GM12878 (cell line): ENCODE measurements at regions of chr4 and their contacts with region 1.

Region 1: DNA sequence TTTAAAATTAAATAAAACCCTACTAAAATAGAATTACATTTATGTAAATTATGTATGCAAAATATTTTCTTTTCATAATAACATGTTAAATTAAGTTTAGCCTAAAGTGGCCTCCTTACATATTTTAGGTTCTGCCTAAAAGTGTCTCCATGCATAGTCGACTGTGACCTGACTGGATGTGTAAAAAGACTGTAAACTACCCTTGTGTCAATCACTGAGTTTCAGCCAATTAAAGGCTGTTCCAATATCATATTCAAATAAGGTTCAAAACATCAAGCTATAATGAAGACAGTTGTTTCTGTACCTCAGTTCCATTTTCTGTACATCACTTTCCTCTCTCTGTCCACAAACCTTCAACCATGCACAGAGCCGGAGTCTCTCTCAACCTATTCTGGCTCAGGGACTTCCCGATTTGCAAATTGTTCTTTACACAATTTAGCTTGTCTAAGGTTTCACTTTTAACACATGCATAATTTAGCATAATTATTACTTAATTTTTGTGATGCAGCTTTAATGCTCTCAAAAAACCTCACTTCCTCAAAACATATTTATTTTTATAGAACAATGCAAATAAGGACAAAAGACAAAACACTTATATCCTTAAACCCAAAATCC is 60.1 kb downstream of the SH3RF1 start:
- DNase-seq: peak; percentile 78
- ATAC-seq: peak; percentile 96
- H3K4me3 ChIP-seq: peak overlapping the region; percentile 29; the same call in 1 of the 2 replicates
- H3K27ac ChIP-seq: peak overlapping the region; percentile 72
- H3K4me1 ChIP-seq: peaks cover 16% of the 10 kb centered on the region
- H3K27me3 ChIP-seq: no peaks in the 10 kb centered on the region
- CTCF ChIP-seq: no peak
- EP300 ChIP-seq: peak in 1 of 2 experiments; percentile 37; a peak in 1 of 4 replicates
- POLR2A ChIP-seq: no peak
- RAD21 ChIP-seq: no peak

Region 2: GRCh38 chr4:168931182-168931650 is 279.4 kb before region 1 on chr4:
- CTCF ChIA-PET with region 1: no interaction called
- POLR2A ChIA-PET with region 1: no interaction called
- RAD21 ChIA-PET with region 1: no interaction called
- SMC1A ChIA-PET with region 1: no interaction called
- in situ Hi-C with region 1: no loop called
- intact Hi-C with region 1: no loop called
- DNase-seq: no peak
- ATAC-seq: no peak
- H3K4me3 ChIP-seq: no peak overlapping the region
- H3K27ac ChIP-seq: no peak overlapping the region
- H3K4me1 ChIP-seq: no peaks in the 10 kb centered on the region
- H3K27me3 ChIP-seq: no peaks in the 10 kb centered on the region
- CTCF ChIP-seq: no peak
- EP300 ChIP-seq: no peak
- POLR2A ChIP-seq: no peak
- RAD21 ChIP-seq: no peak

Region 3: DNA sequence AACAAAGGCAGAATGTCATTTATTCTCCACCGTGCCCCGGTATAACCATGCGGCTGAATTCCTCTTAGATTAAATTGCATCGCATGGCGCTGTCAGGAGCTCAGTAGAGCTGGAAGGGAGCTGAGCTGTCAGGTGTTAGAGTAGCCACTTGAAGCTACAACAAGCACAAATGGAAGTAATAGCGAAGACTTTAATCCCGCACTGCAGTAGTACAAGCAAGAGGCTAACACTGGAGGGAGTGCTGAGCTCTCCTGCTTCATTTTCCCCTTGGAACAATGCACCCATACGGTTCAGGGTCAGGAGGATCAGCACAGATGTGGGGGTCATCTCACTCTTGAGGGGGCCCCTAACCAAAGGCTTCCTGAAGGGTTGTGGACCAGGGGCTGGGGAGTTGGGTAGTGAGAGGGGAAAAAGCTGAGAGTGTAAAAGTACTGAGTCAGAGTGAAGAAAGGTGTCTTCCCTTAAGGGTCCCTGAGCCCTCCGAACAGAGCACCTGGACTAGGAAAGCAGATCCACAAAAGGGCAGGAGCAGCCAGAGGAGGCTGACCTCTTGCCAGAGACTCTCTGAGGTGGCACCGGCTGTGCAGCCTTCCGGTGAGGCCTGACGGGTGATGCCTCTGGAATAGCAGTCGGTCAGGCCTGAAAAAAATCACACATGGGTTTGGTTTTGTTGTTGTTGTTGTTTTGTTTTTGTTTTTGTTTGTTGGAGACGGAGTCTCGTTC is 164.6 kb before region 1 on chr4:
- CTCF ChIA-PET with region 1: no interaction called
- POLR2A ChIA-PET with region 1: no interaction called
- RAD21 ChIA-PET with region 1: no interaction called
- SMC1A ChIA-PET with region 1: no interaction called
- in situ Hi-C with region 1: no loop called
- intact Hi-C with region 1: no loop called
- DNase-seq: no peak
- ATAC-seq: no peak
- H3K4me3 ChIP-seq: no peak overlapping the region
- H3K27ac ChIP-seq: no peak overlapping the region
- H3K4me1 ChIP-seq: no peaks in the 10 kb centered on the region
- H3K27me3 ChIP-seq: no peaks in the 10 kb centered on the region
- CTCF ChIP-seq: no peak
- EP300 ChIP-seq: no peak
- POLR2A ChIP-seq: no peak
- RAD21 ChIP-seq: 0 out of 2 replicates have a peak, but pooled peaks have one; percentile 20

Region 4: DNA sequence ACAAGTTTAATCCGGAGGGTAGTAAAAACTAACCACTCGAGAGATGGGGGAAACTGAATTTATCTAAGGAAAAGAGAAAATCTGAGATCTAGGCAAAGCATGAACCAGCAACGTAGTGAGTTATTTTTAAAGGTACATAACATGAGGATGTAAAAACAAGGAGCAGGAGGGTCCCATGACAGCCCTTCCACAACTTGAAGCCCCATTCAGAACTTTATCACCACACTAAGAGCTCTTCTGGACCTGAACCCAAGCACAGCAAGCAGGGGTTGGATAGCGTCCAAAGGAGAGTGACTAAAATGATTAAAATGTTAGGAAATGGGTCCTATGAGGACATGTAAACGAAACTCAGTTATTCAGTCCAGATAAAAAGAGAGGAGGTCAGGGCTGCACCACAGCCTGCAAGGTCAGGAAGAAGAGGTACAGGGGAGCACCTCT is 44.0 kb after region 1 on chr4:
- CTCF ChIA-PET with region 1: no interaction called
- POLR2A ChIA-PET with region 1: no interaction called
- RAD21 ChIA-PET with region 1: interaction called, 3 read pairs
- SMC1A ChIA-PET with region 1: interaction called, 11 read pairs
- in situ Hi-C with region 1: no loop called
- intact Hi-C with region 1: no loop called
- DNase-seq: no peak
- ATAC-seq: no peak
- H3K4me3 ChIP-seq: no peak overlapping the region
- H3K27ac ChIP-seq: no peak overlapping the region
- H3K4me1 ChIP-seq: no peaks in the 10 kb centered on the region
- H3K27me3 ChIP-seq: no peaks in the 10 kb centered on the region
- CTCF ChIP-seq: no peak
- EP300 ChIP-seq: no peak
- POLR2A ChIP-seq: no peak
- RAD21 ChIP-seq: no peak